PC-9 (cell line): ENCODE measurements at regions of chr15 and their contacts with region 1.

Region 1: DNA sequence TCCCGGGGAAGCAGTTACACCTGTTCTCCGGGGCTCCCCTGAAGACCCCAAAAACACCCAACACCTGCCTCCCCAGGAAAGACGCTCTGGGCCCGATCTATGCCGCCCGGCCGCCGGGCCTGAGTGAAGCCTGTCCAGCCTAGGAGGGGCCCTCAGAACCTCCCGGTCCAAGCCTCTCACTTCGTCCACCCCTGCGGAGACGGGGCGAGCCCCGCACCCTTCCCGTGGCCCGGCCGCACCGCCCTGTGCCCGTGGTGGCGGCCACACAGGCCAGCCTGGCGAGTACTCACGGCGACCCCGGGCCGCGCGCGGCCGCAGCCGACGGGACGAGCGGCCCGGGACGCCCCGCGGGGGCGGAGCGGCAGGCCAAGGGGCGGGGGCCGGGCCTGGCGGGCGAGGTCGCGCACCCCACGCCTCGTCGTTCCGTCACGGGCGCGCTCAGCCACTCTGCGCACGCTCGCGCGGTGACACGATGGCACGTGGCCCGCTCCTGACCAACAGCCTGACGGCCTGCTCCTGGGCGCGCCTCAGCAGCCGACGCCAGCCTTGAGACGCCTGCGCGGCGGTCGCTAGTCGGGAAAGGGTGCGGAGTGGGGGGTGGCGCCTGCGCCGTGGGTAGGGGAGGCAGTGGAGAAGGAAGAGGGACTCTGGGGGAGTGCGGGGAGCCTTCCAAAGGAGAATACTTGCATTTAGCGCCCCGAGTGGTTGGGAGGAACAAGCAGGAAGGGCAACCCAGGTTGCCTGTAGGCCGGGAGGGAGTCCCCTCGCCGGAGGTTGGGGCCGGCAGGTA is at the start of gene PARP6:
- DNase-seq: peak; percentile 90 to 99
- H3K4me3 ChIP-seq: peak within 1 kb of the TSS; percentile 85
- H3K27ac ChIP-seq: peak within 1 kb of the TSS; percentile 48; the same call in 1 of the 2 replicates
- H3K4me1 ChIP-seq: peaks cover 18% of the 10 kb centered on the region
- H3K27me3 ChIP-seq: no peaks in the 10 kb centered on the region
- CTCF ChIP-seq: no peak; the same call in 1 of the 2 replicates
- total RNA-seq, gene PARP6: 51.3 and 65.9 TPM in 2 replicates

Region 2: GRCh38 chr15:71066983-71067382 is 1205.4 kb before region 1 on chr15:
- CTCF ChIA-PET with region 1: no interaction called
- POLR2A ChIA-PET with region 1: no interaction called
- intact Hi-C with region 1: no loop called
- DNase-seq: no peak
- H3K4me3 ChIP-seq: no peak overlapping the region
- H3K27ac ChIP-seq: no peak overlapping the region
- H3K4me1 ChIP-seq: peaks cover 18% of the 10 kb centered on the region
- H3K27me3 ChIP-seq: no peaks in the 10 kb centered on the region
- CTCF ChIP-seq: no peak

Region 3: DNA sequence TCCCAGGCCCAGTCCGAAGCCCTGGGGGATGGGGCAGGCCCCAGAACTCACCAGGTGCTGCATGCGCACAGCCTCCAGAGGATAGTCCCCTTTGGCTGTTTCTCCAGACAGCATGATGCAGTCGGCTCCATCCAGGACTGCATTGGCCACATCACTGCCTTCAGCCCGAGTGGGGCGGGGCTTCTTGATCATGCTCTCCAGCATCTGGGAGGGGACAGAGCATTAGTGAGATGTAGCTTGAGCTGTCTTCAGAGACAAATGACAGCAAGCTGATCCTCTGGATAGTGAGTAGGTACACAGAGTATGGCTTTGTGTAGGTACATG is 65.8 kb before region 1 on chr15:
- CTCF ChIA-PET with region 1: no interaction called
- POLR2A ChIA-PET with region 1: no interaction called
- intact Hi-C with region 1: no loop called
- DNase-seq: no peak
- H3K4me3 ChIP-seq: no peak overlapping the region
- H3K27ac ChIP-seq: no peak overlapping the region
- H3K4me1 ChIP-seq: no peaks in the 10 kb centered on the region
- H3K27me3 ChIP-seq: no peaks in the 10 kb centered on the region
- CTCF ChIP-seq: no peak

Region 4: GRCh38 chr15:72231066-72231846 is 41.2 kb before region 1 on chr15 and contains the start of gene PKM:
- CTCF ChIA-PET with region 1: no interaction called
- POLR2A ChIA-PET with region 1: no interaction called
- intact Hi-C with region 1: loop called (anchors 5 kb)
- DNase-seq: peak; percentile 91 to 99
- H3K4me3 ChIP-seq: peak within 1 kb of the TSS; percentile 70
- H3K27ac ChIP-seq: peak within 1 kb of the TSS; percentile 88
- H3K4me1 ChIP-seq: peaks cover 57% of the 10 kb centered on the region
- H3K27me3 ChIP-seq: no peaks in the 10 kb centered on the region
- CTCF ChIP-seq: no peak
- total RNA-seq, gene PKM: 1,294 and 1,809 TPM in 2 replicates

Region 5: DNA sequence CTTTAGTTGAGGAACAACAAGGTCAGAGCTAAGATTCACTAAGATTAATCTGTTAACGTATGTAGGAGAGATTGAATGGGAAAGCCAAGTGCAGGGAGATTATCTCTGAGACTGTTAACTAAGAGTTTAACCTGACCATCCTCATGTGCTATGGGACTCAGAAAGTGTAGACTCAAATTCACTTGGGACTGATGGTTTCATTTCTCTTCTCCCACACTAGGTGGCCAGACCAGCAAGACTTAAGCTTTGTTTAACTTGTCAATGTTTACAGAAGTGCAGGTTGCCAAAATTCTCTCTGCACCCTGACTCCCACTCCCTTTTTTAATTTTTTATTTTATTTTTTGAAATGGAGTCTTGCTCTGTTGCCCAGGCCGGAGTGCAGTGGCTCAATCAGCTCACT is 109.7 kb after region 1 on chr15:
- CTCF ChIA-PET with region 1: no interaction called
- POLR2A ChIA-PET with region 1: no interaction called
- intact Hi-C with region 1: no loop called
- DNase-seq: no peak
- H3K4me3 ChIP-seq: no peak overlapping the region
- H3K27ac ChIP-seq: no peak overlapping the region
- H3K4me1 ChIP-seq: no peaks in the 10 kb centered on the region
- H3K27me3 ChIP-seq: peaks cover 32% of the 10 kb centered on the region
- CTCF ChIP-seq: no peak

Region 6: DNA sequence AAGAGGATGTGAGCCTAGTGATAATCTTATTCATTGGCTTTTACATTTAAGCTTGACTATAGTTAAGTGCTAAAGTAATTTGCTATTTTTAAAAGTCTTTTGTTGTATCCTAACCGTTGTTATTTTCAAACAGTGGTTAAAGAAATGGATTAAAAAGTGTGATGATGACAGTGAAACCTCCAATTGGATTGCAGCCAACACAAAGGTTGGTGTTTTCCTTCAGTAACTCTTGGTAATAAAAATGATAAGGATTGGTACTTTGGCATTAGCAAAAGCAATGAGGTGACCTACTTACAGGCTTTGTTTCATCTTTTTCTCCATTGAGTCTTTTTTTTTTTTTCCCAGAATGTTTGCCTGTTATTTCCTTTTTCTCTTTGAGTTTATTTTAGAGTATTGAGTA is 294.6 kb after region 1 on chr15:
- CTCF ChIA-PET with region 1: no interaction called
- POLR2A ChIA-PET with region 1: no interaction called
- intact Hi-C with region 1: no loop called
- DNase-seq: no peak
- H3K4me3 ChIP-seq: no peak overlapping the region
- H3K27ac ChIP-seq: no peak overlapping the region
- H3K4me1 ChIP-seq: no peaks in the 10 kb centered on the region
- H3K27me3 ChIP-seq: no peaks in the 10 kb centered on the region
- CTCF ChIP-seq: no peak